ENCODE measurements at regions of chr10 and their contacts with region 1.

Region 1: GRCh38 chr10:78148961-78149610 is 115.4 kb downstream of the RPS24 start:
- DNase-seq: no peak
- H3K4me3 ChIP-seq: no peak overlapping the region
- H3K27ac ChIP-seq: no peak overlapping the region
- H3K27me3 ChIP-seq: no peaks in the 10 kb centered on the region
- CTCF ChIP-seq: no peak

Region 2: DNA sequence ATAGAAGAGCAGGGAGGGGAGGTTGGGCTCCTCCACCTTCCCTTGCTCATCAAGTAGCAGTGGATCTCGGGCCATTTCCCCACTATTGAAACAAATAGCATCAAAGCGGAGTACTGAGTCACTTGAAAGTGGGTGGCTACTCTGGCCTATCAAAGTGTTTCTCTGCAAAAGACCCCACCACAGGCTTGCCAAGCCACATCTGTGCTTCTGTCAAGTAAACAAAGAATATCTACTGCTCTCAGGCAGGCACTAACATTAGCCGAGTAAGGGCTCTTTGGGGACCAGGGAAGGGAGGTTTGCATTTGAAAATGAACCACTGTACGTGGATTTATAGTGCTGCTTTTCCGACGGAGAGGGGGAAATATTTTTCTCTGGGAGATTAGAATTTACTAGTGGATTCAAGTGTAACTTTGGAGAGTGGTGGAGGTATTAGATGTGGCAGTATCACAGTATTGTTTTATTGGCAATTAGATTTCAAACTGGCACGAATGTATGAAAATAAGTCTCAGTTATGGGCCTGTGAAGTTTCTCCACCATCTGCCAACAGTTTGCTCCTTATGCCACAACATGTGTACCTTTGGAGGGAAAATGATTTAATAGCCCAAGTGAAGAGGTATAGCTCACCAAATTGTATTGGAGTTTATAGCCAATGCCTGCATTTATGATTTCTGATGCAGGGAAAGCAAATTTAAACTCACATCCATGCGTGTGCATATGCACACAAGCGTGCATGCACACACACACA is 17.9 kb before region 1 on chr10:
- intact Hi-C with region 1: loop called in 1 of 2 experiments (anchors 1 kb)
- DNase-seq: no peak
- H3K4me3 ChIP-seq: no peak overlapping the region
- H3K27ac ChIP-seq: no peak overlapping the region
- H3K27me3 ChIP-seq: no peaks in the 10 kb centered on the region
- CTCF ChIP-seq: no peak

Measured in dorsolateral prefrontal cortex (tissue), 120 donors.